Heart right ventricle (tissue), 16 donors: ENCODE measurements at regions of chr5 and their contacts with region 1.

Region 1: GRCh38 chr5:1652596-1653345 is 129.0 kb upstream of the LPCAT1 start:
- DNase-seq: no peak
- ATAC-seq: peak in 4 of 8 donors; percentile 15 to 55 (median 34)
- H3K4me3 ChIP-seq: no peak overlapping the region
- H3K27ac ChIP-seq: no peak overlapping the region
- H3K4me1 ChIP-seq: peaks cover 0 to 10% (median 6%) of the 10 kb centered on the region in 9 donors
- H3K27me3 ChIP-seq: peaks cover 5 to 76% (median 58%) of the 10 kb centered on the region in 7 donors
- CTCF ChIP-seq: no peak

Region 2: DNA sequence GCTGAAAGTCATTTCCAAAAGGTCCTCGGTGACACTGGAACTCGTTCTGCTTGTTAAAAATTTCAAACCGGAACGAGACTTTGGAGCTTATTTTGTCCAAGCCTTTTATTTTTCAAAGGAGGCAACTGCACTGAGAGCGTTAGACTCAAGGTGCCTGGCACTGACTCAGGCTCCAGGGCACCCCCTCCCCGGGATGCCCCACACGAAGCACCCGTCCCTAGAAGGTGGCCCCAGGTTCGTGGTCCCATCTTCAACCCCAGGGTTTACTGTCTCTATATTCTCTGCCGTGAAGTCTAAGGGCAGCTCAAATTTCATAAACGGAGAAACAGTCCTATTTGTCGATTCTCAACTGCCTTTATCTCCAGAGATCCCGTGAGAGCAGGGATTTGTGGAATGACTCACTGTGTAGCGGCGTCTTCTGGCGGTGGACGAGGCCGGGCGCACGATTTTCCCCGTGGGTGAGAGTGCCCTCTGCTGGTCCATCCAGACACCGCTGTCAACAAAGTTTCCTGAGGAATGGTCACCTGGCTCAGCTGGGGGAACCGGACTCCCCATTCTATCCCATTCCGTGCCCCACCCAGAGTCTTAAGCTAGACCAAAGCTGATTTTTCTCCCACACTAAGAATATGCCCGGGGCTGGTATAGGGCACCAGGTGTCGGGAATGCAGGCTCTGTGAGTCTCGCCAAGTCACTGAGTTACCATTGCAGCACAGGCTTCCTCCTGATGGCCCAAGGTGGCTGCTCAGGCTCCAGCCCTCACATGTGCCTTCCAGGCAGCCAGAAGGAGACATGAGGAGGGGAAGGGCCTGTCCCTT is 478.4 kb before region 1 on chr5:
- intact Hi-C with region 1: loop called in 5 of 10 experiments (anchors 5 to 10 kb)
- DNase-seq: peak; percentile 61 to 68
- ATAC-seq: peak; percentile 57 to 83 (median 69)
- H3K4me3 ChIP-seq: no peak overlapping the region
- H3K27ac ChIP-seq: peak overlapping the region in 1 of 10 donors; percentile 31
- H3K4me1 ChIP-seq: peaks cover 0 to 5% (median 0%) of the 10 kb centered on the region in 9 donors
- H3K27me3 ChIP-seq: peaks cover 0 to 5% (median 0%) of the 10 kb centered on the region in 7 donors
- CTCF ChIP-seq: peak; percentile 58 to 85 (median 80)